Activated CD4-positive, alpha-beta T cell treated with anti-CD3 and anti-CD28 coated beads for 36 hours (primary cell): ENCODE measurements at regions of chr1 and their contacts with region 1.

Region 1: GRCh38 chr1:64923294-64923721 is 43.0 kb downstream of the JAK1 start:
- DNase-seq: peak; percentile 64
- ATAC-seq: peak; percentile 68
- H3K4me3 Mint-ChIP-seq: peak overlapping the region; percentile 46
- H3K27ac Mint-ChIP-seq: peak overlapping the region; percentile 88
- H3K4me1 Mint-ChIP-seq: peaks cover 95% of the 10 kb centered on the region
- H3K27me3 Mint-ChIP-seq: no peaks in the 10 kb centered on the region

Region 2: DNA sequence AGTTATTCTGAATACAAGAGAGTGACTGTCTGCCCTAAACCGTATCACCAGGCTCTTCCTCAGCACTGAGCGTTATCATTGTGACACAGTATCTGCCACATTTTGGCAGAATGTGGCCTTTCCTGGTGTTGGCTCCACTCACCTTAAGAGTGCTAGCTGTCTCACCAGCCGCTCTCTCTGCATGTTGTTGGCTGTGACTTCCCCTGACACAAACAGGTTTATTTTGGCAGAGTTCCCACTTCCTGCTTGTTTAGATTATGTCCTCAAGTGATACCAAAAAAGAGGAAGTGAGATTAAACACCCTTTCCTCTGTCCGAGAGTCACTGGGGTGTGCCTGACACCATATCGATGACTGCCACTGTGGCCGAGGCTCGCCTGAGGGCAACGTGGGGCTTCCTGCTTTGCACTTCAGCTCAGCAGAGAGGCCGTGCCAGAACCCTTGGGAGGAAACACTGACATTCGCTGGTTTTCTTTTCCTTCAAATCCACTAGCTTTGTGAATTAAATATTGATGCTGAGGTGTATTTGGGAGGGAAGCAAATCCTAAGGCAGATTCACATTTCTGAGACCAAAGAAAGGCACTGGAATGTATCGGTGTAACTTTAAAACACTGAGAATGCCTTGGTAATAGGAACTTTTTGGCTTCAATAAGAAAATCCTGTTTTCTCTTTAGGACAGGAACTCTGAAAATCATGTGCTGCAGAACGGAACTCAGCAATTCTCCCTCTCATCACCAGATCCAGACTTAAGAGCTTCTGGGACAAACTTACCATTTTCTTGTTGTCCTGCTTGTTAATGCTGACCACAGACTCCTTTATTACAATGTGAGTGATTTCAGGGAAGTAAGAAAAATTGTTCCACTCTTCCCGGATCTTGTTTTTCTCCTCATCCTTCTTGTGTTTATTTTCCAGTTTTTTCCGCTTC is 59.0 kb before region 1 on chr1:
- CTCF ChIA-PET with region 1: no interaction called
- POLR2A ChIA-PET with region 1: no interaction called
- intact Hi-C with region 1: no loop called
- DNase-seq: peak; percentile 57
- ATAC-seq: peak; percentile 82
- H3K4me3 Mint-ChIP-seq: no peak overlapping the region
- H3K27ac Mint-ChIP-seq: peak overlapping the region; percentile 49
- H3K4me1 Mint-ChIP-seq: peaks cover 18% of the 10 kb centered on the region
- H3K27me3 Mint-ChIP-seq: no peaks in the 10 kb centered on the region

Region 3: GRCh38 chr1:64898107-64898845 is 25.0 kb before region 1 on chr1:
- CTCF ChIA-PET with region 1: interaction called, 4 read pairs
- POLR2A ChIA-PET with region 1: interaction called, 4 read pairs
- intact Hi-C with region 1: loop called in 1 of 2 experiments (anchors 2 kb)
- DNase-seq: peak; percentile 64
- ATAC-seq: peak; percentile 79
- H3K4me3 Mint-ChIP-seq: no peak overlapping the region
- H3K27ac Mint-ChIP-seq: no peak overlapping the region
- H3K4me1 Mint-ChIP-seq: peaks cover 93% of the 10 kb centered on the region
- H3K27me3 Mint-ChIP-seq: no peaks in the 10 kb centered on the region

Region 4: DNA sequence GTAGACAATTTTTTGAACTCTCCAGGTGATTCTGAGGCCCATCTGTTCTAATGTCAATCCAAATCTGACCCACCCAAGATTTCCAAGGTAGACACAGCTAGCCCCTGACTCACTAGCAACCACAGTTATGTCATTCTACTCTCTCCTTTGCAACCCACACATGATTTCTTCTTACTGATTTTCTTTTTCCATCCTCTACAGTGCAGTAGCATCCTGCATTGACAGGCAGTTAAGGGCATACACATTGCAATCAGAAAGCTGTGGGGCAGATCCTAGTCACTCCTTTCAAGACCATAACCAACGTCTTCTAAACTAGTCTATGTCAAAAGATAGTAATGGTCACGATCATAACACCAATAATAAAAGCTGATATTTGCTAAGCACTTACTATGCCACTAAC is 11.1 kb before region 1 on chr1:
- CTCF ChIA-PET with region 1: interaction called, 10 read pairs
- POLR2A ChIA-PET with region 1: interaction called, 8 read pairs
- intact Hi-C with region 1: loop called (anchors 1 kb)
- DNase-seq: peak; percentile 27
- ATAC-seq: peak; percentile 93
- H3K4me3 Mint-ChIP-seq: no peak overlapping the region
- H3K27ac Mint-ChIP-seq: peak overlapping the region; percentile 61
- H3K4me1 Mint-ChIP-seq: peaks cover 89% of the 10 kb centered on the region
- H3K27me3 Mint-ChIP-seq: no peaks in the 10 kb centered on the region

Region 5: DNA sequence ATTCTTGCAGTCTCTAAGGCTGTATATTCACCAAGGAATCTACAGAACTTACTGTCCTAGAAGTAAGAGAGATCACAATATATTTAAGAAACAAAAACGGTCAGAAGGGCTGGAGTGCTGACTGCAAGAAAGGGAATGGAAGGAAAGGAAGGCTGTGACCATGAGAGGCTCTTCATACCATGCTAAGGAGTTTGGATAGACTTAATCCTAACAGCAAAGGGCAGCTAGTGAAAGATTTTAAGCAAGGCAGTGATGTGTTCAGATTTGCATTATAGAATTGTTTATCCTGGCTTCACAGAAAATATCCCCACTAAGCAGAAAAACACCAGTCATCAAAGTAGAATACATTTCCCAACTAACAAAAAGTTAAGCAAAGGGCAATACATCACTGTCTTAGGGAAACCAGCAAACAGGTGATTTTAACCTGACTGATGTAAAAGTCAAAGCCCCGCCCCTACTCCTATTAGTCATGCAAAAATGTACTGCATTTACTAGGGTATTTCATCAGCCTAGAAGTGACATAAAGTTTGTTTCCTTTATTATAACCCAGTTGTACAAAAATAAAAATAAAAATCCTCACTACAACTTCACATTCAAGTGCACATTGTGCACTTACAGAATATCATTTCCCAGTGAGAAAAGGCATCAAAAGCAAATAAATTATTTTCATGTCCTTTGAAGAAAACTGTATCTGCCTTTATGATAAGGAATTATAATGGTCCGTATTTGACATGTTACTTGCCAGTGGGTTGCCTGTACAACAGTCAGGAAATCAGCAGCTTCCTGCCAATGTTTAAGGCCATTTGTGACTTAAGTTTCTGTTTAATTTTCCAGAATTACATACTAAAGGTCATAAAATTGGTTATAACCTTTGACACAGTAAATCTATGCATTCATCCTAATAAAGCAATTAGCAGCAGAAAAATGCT is 25.9 kb after region 1 on chr1:
- CTCF ChIA-PET with region 1: no interaction called
- POLR2A ChIA-PET with region 1: no interaction called
- intact Hi-C with region 1: loop called in 1 of 2 experiments (anchors 1 kb)
- DNase-seq: peak; percentile 71
- ATAC-seq: peak; percentile 87
- H3K4me3 Mint-ChIP-seq: peak overlapping the region; percentile 29
- H3K27ac Mint-ChIP-seq: peak overlapping the region; percentile 86
- H3K4me1 Mint-ChIP-seq: peaks cover 80% of the 10 kb centered on the region
- H3K27me3 Mint-ChIP-seq: no peaks in the 10 kb centered on the region

Region 6: GRCh38 chr1:64966158-64966971 is 43.1 kb after region 1 on chr1 and contains the start of gene JAK1:
- CTCF ChIA-PET with region 1: interaction called, 32 read pairs
- POLR2A ChIA-PET with region 1: interaction called, 13 read pairs
- intact Hi-C with region 1: loop called (anchors 1 kb)
- DNase-seq: peak; percentile 95
- ATAC-seq: peak; percentile 64
- H3K4me3 Mint-ChIP-seq: peak within 1 kb of the TSS; percentile 83
- H3K27ac Mint-ChIP-seq: peak within 1 kb of the TSS; percentile 90
- H3K4me1 Mint-ChIP-seq: peaks cover 50% of the 10 kb centered on the region
- H3K27me3 Mint-ChIP-seq: no peaks in the 10 kb centered on the region
- total RNA-seq, gene JAK1: 100 to 114 TPM

Region 7: DNA sequence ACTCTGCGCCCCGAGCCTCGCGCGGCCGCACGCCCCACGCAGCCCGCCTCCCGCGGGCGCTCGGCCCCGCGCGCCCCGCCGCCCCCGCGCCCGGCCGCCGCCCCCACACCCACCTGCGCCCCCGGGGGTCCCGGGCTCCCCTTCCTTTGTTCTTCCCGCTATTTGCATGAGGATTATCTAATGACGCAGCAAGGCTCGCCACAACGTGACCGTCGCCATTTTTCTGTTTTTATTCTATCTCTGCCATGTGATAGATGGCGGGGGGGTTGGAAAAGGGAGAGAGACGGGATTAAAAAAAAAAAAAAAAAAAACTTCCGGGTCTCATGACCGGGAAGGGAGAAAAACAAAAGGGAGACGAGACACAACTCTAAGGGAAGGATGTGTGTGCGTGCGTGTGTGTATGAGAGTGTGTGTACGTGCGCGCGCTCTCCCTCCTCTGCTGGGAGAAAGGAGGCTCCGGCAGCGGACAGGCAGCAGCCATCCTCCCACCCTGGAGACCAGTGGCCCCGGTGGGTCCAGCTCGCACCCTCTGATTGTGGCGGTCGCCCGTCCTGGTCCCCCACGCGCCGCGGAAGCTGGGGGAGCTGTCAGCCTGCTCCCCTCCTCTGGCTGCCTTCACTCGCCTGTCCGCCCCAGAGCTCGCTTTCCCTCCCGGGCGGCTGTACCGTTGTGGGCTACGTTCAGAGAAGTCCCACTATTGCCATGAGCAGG is 144.3 kb after region 1 on chr1:
- CTCF ChIA-PET with region 1: no interaction called
- POLR2A ChIA-PET with region 1: no interaction called
- intact Hi-C with region 1: loop called in 1 of 2 experiments (anchors 5 kb)
- DNase-seq: peak; percentile 70
- ATAC-seq: peak; percentile 27
- H3K4me3 Mint-ChIP-seq: peak overlapping the region; percentile 93
- H3K27ac Mint-ChIP-seq: peak overlapping the region; percentile 95
- H3K4me1 Mint-ChIP-seq: peaks cover 52% of the 10 kb centered on the region
- H3K27me3 Mint-ChIP-seq: no peaks in the 10 kb centered on the region